CD4-positive, alpha-beta memory T cell (primary cell): ENCODE measurements at regions of chr16 and their contacts with region 1.

Region 1: GRCh38 chr16:56931892-56932720 is at the start of gene HERPUD1:
- DNase-seq: peak; percentile 98 to 99 (median 99)
- H3K4me3 ChIP-seq: peak within 1 kb of the TSS; percentile 51 to 83
- H3K4me3 Mint-ChIP-seq: peak within 1 kb of the TSS; percentile 95 to 99 (median 98)
- H3K27ac ChIP-seq: peak within 1 kb of the TSS; percentile 96
- H3K27ac Mint-ChIP-seq: peak within 1 kb of the TSS; percentile 95 to 99 (median 98)
- H3K4me1 ChIP-seq: peaks cover 48% of the 10 kb centered on the region
- H3K4me1 Mint-ChIP-seq: peaks cover 23 to 52% (median 37%) of the 10 kb centered on the region in 4 donors
- H3K27me3 ChIP-seq: no peaks in the 10 kb centered on the region
- H3K27me3 Mint-ChIP-seq: no peaks in the 10 kb centered on the region
- total RNA-seq, gene HERPUD1: 130 to 136 TPM

Region 2: DNA sequence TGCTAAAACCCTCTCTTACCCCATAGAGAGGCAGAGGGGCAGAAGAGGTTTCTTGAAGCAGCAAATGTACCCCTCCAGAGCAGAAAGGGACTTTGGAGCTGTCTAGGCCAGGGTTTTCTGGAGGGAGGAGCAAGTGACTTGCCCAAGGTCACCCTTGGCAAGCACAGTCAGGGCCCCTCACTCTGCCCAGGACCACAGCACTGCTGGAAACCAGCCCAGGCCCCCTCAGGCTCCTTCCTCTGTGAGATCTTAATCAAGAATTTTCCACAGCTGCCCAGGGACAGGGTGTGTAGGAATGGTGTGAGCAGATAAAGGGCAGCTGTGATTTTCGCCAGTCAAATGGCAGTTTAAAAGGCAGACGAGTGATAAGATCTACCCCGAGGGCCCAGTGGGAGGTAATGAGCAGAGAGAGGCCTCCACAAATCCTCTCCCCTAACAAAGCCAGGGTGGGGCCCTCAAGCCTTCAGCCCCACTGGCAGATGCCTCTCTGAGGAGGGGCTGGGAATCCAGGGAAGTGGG is 71.0 kb before region 1 on chr16:
- CTCF ChIA-PET with region 1: interaction called, 5 read pairs
- POLR2A ChIA-PET with region 1: interaction called, 12 read pairs
- intact Hi-C with region 1: no loop called
- DNase-seq: no peak
- H3K4me3 ChIP-seq: no peak overlapping the region
- H3K4me3 Mint-ChIP-seq: peak overlapping the region in 6 of 8 donors; percentile 45 to 90 (median 84)
- H3K27ac ChIP-seq: peak overlapping the region; percentile 57
- H3K27ac Mint-ChIP-seq: peak overlapping the region; percentile 85 to 96 (median 95)
- H3K4me1 ChIP-seq: peaks cover 49% of the 10 kb centered on the region
- H3K4me1 Mint-ChIP-seq: peaks cover 36 to 52% (median 45%) of the 10 kb centered on the region in 4 donors
- H3K27me3 ChIP-seq: no peaks in the 10 kb centered on the region
- H3K27me3 Mint-ChIP-seq: no peaks in the 10 kb centered on the region

Region 3: DNA sequence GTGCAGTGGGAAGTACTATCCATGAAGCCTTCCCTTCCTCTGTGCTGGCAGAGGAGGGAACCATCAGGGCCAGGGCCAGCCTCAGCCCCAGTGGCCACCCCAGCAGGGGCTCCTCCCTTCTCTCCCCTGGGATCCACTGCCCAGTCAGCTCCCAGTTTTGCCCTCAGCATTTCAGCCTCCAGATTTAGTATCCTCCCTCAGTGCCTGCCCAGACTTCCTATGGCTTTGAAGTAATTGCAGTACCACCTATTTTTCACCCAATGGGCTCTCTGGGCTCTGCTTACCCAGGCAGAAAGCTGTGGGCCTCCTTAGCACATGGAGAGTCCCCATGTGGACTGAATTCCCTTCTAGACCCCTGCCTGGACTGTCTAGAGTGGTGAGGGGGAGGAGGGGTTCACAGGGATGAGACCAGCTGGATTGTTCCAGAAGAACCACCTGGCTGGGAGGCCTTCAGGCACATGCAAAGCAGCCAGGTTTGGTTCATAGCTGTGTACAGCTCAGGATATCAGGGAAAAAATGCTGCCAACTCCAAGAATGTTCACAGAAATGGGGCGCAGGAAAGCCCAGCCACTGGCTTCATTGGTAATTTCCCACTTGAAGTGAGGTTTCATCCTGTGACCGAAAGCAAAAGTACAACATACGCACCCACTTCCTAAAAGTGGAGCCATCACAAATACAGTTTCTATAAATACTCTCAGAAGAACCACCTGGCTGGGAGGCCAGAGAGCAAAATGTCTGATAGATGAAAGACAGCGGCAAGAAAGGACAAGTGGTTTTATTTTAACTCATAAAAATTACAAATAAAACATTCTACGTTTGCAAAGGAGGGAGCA is 15.3 kb before region 1 on chr16:
- CTCF ChIA-PET with region 1: interaction called, 5 read pairs
- POLR2A ChIA-PET with region 1: interaction called, 45 read pairs
- intact Hi-C with region 1: no loop called
- DNase-seq: peak in 4 of 5 donors; percentile 26 to 50 (median 35)
- H3K4me3 ChIP-seq: peak overlapping the region in 1 of 2 donors; percentile 13
- H3K4me3 Mint-ChIP-seq: peak overlapping the region; percentile 1 to 85 (median 56)
- H3K27ac ChIP-seq: peak overlapping the region; percentile 35
- H3K27ac Mint-ChIP-seq: peak overlapping the region; percentile 61 to 93 (median 86)
- H3K4me1 ChIP-seq: peaks cover 20% of the 10 kb centered on the region
- H3K4me1 Mint-ChIP-seq: peaks cover 15 to 31% (median 16%) of the 10 kb centered on the region in 4 donors
- H3K27me3 ChIP-seq: no peaks in the 10 kb centered on the region
- H3K27me3 Mint-ChIP-seq: peaks cover 3 to 4% of the 10 kb centered on the region in 2 donors

Region 4: DNA sequence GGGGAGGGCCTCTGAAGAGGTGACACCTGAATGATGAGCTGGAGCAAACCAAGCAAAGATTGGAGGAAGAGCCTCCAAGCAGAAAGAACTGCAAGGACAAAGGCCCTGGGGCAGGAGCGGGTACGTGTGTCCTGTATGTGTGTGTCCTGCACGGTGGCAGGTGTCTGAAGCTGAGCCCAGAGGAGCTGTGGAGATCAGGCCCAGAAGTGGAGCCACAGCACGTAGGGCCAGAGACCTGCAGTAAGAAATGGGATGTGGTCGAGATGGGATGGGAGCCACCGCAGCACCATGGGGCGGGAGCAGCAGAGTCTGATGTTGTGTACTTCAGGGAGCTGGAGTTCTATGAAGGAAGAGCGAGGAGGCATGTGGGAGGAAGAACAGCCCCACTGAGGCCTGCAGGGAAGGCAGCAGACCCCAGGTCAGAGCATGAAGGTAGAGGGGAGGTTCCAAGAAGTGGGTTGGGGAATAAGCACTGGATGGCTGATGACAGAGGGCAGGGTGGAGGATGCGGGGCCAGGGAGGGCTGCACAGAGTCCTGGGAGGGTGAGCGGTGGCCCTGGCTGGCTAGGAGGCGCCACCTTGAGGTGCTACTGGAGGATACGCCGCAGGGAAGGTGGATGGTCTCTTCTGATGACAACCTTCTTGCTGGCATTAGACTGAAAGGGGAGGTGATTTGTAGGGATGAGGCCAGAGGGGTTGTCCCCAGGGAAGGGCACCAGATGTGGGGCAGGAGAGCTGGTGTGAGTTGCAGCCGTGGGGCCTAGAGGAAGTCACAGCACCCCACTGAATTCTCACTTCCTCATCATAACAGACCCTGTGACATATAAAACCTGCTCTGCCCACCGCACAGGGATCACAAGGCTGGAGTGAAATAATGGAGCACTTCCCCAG is 19.0 kb after region 1 on chr16:
- CTCF ChIA-PET with region 1: interaction called, 3 read pairs
- POLR2A ChIA-PET with region 1: interaction called, 51 read pairs
- intact Hi-C with region 1: no loop called
- DNase-seq: peak; percentile 39 to 57 (median 43)
- H3K4me3 ChIP-seq: no peak overlapping the region
- H3K4me3 Mint-ChIP-seq: no peak overlapping the region
- H3K27ac ChIP-seq: no peak overlapping the region
- H3K27ac Mint-ChIP-seq: peak overlapping the region; percentile 11 to 70 (median 25)
- H3K4me1 ChIP-seq: no peaks in the 10 kb centered on the region
- H3K4me1 Mint-ChIP-seq: peaks cover 5 to 13% (median 8%) of the 10 kb centered on the region in 4 donors
- H3K27me3 ChIP-seq: no peaks in the 10 kb centered on the region
- H3K27me3 Mint-ChIP-seq: no peaks in the 10 kb centered on the region

Region 5: DNA sequence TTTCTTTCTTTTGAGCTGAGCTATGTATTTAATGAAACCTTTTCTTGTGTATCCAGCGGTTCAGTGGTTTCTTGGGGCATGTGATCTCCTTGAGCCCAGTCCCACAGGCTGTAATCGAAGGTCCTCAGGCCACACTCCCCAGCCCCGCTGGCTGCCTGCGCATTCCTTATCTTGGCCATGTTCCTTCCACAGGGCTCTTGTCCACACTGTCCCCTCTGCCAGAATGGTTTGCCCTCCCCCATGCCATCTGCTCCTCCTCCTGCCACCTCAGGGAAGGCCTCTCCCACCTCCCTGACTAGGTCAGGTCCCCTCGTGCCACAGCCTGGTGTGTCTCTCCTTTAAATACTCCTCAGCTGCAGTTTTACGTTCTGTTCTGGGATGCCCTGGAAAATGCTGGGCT is 45.1 kb after region 1 on chr16:
- CTCF ChIA-PET with region 1: no interaction called
- POLR2A ChIA-PET with region 1: no interaction called
- intact Hi-C with region 1: no loop called
- DNase-seq: no peak
- H3K4me3 ChIP-seq: no peak overlapping the region
- H3K4me3 Mint-ChIP-seq: no peak overlapping the region
- H3K27ac ChIP-seq: no peak overlapping the region
- H3K27ac Mint-ChIP-seq: peak overlapping the region in 3 of 7 donors; percentile 7 to 60 (median 46)
- H3K4me1 ChIP-seq: peaks cover 26% of the 10 kb centered on the region
- H3K4me1 Mint-ChIP-seq: peaks cover 21 to 57% (median 36%) of the 10 kb centered on the region in 4 donors
- H3K27me3 ChIP-seq: no peaks in the 10 kb centered on the region
- H3K27me3 Mint-ChIP-seq: no peaks in the 10 kb centered on the region

Region 6: DNA sequence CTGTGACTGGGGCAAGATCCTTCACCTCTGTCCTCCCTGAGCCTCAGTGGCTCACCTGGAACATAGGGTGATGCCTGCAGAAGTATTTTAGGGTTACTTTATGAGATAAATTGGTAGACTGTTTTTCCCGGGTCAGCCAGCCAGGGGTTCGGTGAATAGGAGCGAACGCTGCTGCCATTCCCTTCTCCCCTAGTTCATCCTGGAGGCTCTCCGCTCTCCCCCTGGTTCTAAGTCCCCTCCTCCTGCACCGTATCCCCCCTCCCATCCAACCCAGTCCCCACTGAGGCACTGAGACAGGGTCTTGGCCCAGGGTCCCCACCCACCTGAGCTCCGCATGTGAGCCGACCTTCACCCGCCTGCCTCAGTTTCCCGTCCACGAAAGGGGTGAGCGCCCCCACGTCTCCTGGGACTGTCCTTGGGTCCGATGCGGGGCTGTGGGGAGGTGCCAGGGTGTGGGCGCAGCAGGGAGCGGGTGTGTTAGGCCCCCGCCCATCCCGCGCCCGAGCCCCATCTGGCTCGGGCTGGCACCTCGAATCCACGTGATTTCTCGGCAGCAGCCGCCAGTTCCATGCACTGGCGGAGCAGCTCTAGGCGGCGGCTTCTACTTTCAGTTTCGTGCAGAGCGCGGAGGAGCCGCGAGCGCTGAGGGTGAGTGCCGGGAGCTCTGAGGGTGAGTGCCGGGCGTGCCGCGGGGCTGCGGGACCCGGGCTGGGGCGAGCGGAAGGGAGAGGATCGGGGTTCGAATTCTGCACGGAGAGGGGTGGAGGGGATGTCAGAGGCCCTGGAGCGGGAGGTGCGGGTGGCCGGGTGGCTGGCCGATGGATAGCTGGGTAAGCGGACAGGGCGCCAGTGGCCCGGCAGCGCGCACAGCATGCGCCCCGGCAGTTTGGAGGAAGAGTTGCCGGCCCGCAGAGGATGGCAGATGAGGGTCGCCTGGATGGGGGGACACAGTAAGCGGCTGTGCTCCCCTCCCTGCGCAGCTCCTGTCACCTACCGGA is 57.1 kb after region 1 on chr16 and contains the start of gene NLRC5:
- CTCF ChIA-PET with region 1: no interaction called
- POLR2A ChIA-PET with region 1: interaction called, 38 read pairs
- intact Hi-C with region 1: loop called (anchors 2 kb)
- DNase-seq: peak; percentile 85 to 94 (median 89)
- H3K4me3 ChIP-seq: peak within 1 kb of the TSS; percentile 85 to 91
- H3K4me3 Mint-ChIP-seq: peak within 1 kb of the TSS; percentile 94 to 100 (median 99)
- H3K27ac ChIP-seq: peak within 1 kb of the TSS; percentile 97
- H3K27ac Mint-ChIP-seq: peak within 1 kb of the TSS; percentile 89 to 100 (median 98)
- H3K4me1 ChIP-seq: peaks cover 72% of the 10 kb centered on the region
- H3K4me1 Mint-ChIP-seq: peaks cover 50 to 96% (median 64%) of the 10 kb centered on the region in 4 donors
- H3K27me3 ChIP-seq: no peaks in the 10 kb centered on the region
- H3K27me3 Mint-ChIP-seq: no peaks in the 10 kb centered on the region
- total RNA-seq, gene NLRC5: 416 to 457 TPM

Region 7: DNA sequence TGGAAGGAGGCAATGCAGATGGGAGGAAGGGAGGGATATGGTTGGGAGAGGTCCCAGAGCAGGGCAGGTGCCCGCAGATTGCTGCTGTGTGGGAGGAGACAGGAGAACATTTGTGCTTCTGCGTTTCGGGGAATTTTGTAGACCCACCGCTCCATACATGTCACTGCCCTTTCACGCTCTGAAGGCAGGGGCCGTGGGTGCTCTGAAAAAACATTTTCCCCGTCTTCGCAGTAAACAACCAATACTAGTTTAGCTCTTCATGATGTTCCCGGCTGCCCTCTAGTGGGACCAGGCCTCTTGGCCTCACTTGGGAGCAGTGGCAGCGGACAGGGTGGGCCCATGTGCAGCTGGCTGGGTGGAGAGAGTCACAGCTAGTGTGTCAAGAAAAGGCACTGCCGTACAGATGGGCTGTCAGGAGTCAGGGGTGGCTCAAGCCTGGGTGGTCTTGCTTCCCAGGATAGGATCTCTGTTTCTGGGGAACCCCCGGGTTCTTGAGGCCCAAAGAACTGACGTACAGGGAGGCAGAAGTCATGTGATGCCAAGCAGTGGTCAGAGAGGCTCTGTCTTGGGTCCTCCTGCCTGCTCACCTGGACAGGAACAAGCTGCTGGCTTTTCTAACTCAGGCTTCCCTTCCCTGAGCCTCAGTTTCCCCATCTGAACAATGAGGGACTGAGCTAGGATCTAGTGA is 113.7 kb after region 1 on chr16:
- CTCF ChIA-PET with region 1: interaction called, 3 read pairs
- POLR2A ChIA-PET with region 1: interaction called, 19 read pairs
- intact Hi-C with region 1: no loop called
- DNase-seq: no peak
- H3K4me3 ChIP-seq: no peak overlapping the region
- H3K4me3 Mint-ChIP-seq: peak overlapping the region in 1 of 8 donors; percentile 9
- H3K27ac ChIP-seq: peak overlapping the region; percentile 21
- H3K27ac Mint-ChIP-seq: peak overlapping the region; percentile 60 to 98 (median 77)
- H3K4me1 ChIP-seq: peaks cover 49% of the 10 kb centered on the region
- H3K4me1 Mint-ChIP-seq: peaks cover 28 to 47% (median 36%) of the 10 kb centered on the region in 4 donors
- H3K27me3 ChIP-seq: no peaks in the 10 kb centered on the region
- H3K27me3 Mint-ChIP-seq: no peaks in the 10 kb centered on the region